H1 (cell line): ENCODE measurements at regions of chr3 and their contacts with region 1.

Region 1: DNA sequence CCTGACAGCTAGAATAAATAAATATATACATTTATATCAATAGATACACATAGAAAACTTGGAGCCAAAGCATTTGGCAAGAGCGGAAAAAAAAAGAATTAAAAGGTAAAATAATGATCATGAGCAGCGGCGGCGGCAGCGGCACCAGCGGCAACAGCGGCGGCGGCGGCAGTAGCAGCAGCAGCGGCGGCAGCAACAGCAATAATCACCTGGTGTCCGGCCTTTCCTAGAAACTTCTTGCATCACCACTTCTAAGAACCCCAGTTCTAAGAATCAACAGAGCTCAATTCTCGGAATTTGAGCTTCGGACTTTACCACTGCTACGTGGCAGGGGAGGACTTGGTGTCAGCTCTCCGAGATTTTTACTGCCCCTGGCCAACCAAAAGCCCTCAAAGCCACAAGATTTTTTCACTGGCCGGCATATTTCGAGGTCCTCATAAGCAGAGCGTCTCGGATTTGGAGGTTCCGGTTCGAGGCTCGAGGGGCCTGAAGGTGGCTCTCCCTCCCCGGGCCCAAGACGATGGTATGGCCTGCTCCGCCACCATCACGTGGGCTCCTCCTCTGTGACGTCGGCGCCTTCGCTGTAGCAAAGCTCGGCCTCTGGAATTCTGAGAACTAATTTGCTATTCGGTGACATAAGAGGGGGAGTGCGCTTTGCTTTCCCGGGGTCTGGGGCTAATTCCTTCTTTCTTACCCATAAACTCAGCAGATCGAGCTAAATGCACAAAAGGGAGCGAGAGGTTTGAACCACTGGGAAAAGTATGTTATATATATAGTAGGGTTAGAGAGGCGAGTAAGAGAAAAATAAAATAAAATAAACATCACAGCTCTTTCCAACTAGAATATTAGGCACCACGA is at the start of gene BCL6:
- DNase-seq: peak; percentile 83 to 89
- H3K4me3 ChIP-seq: peak within 1 kb of the TSS; percentile 79 to 91 (median 87)
- H3K27ac ChIP-seq: peak within 1 kb of the TSS; percentile 100
- H3K4me1 ChIP-seq: peaks cover 9 to 21% (median 11%) of the 10 kb centered on the region in 4 experiments; a peak in 6 of 7 replicates
- H3K27me3 ChIP-seq: peaks cover 0 to 10% (median 5%) of the 10 kb centered on the region in 4 experiments; a peak in 3 of 7 replicates
- CTCF ChIP-seq: no peak
- EP300 ChIP-seq: peak in 1 of 2 experiments; percentile 99; a peak in 2 of 3 replicates
- POLR2A ChIP-seq: peak; percentile 86 to 88
- RAD21 ChIP-seq: peak in 1 of 2 experiments; percentile 11; a peak in 1 of 4 replicates
- total RNA-seq, gene BCL6: 8.7 and 10.4 TPM in 2 replicates

Region 2: DNA sequence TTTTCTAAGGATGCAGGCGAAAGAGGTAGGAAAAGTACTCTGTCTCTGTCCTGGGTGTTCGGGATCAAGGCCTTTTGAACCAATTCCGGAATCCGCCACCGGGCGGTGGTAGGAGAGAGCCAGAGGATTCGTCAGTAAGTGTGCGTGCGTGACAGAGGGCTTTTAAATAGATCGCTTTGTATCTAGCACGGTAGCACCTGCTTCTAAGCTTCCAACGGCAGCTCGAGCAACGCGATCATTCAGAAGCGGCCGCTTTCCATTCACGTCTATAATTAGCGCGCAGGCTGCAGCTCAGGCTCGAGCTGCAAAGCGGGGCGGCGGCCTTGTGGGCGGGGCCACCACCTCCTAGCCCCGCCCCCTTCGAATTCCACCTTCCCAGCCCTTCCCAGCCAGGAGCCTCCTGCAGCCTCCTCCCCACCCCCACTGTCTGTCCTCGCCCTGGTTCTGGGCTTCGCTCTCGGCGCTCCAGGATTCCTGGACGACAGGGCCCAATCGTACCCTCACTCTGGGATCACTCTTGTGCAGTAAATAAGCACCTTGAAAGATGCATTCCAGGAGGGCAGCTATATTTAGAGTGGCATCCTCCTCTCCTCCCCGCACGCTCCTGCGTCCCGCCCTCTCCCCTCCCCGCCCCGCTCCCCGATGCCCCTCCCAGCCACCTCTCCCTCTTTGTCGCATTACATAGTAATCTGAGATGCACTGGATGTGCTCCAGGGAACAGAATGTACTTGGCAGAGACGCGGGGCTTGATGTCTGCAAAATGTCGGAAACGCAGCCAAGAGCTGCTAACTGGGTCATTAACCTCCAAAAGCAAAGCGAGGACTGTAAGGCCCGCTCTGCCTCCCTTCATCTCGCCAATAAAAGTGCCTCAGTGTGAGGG is 1202.2 kb after region 1 on chr3:
- CTCF ChIA-PET with region 1: interaction called, 107 read pairs
- POLR2A ChIA-PET with region 1: interaction called, 13 read pairs
- DNase-seq: peak; percentile 74 to 92
- H3K4me3 ChIP-seq: peak overlapping the region; percentile 49 to 71 (median 66)
- H3K27ac ChIP-seq: peak overlapping the region; percentile 82
- H3K4me1 ChIP-seq: peaks cover 3 to 12% (median 8%) of the 10 kb centered on the region in 4 experiments; a peak in 6 of 7 replicates
- H3K27me3 ChIP-seq: peaks cover 0 to 4% (median 1%) of the 10 kb centered on the region in 4 experiments; a peak in 1 of 7 replicates
- CTCF ChIP-seq: peak; percentile 12 to 55 (median 31)
- EP300 ChIP-seq: no peak
- POLR2A ChIP-seq: peak; percentile 61 to 65
- RAD21 ChIP-seq: peak in 1 of 2 experiments; percentile 32; a peak in 1 of 4 replicates